ENCODE measurements at regions of chr10 and their contacts with region 1.

Region 1: GRCh38 chr10:15097011-15097812 is at the start of gene RPP38:
- DNase-seq: peak; percentile 94
- H3K4me3 Mint-ChIP-seq: peak within 1 kb of the TSS; percentile 100
- H3K27ac Mint-ChIP-seq: peak within 1 kb of the TSS; percentile 99
- H3K4me1 Mint-ChIP-seq: peaks cover 29% of the 10 kb centered on the region
- H3K27me3 Mint-ChIP-seq: peaks cover 10% of the 10 kb centered on the region
- total RNA-seq, gene RPP38: 19.6 and 24.8 TPM in 2 replicates

Region 2: DNA sequence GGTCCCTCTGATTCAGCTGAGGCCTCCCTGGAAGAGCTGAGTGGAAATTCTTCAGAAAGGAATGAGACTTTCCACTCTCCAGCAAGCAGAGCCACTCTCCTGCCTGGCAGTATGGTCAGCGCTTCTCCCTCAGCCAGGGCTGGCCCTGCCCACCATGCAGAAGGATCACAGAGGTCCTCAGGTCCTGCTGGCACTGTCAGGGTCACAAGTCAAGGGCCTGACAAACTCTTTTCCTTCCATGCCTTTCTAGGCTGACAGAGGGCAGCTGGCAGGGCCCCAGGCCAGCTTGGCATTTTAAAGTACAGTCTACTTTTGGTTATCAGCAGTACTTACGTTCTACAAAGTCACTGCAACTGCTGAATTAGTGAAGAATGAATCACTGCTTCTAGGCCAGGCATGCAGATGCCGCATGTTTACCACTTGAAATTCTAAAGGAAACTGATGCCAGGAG is 647.1 kb before region 1 on chr10:
- intact Hi-C with region 1: no loop called
- DNase-seq: no peak
- H3K4me3 Mint-ChIP-seq: no peak overlapping the region
- H3K27ac Mint-ChIP-seq: no peak overlapping the region
- H3K4me1 Mint-ChIP-seq: no peaks in the 10 kb centered on the region
- H3K27me3 Mint-ChIP-seq: peaks cover 9% of the 10 kb centered on the region

Region 3: GRCh38 chr10:14954001-14954770 is 143.0 kb before region 1 on chr10 and contains the start of gene DCLRE1C:
- intact Hi-C with region 1: loop called (anchors 1 kb)
- DNase-seq: peak; percentile 89
- H3K4me3 Mint-ChIP-seq: peak within 1 kb of the TSS; percentile 94
- H3K27ac Mint-ChIP-seq: peak within 1 kb of the TSS; percentile 95
- H3K4me1 Mint-ChIP-seq: peaks cover 57% of the 10 kb centered on the region
- H3K27me3 Mint-ChIP-seq: no peaks in the 10 kb centered on the region
- total RNA-seq, gene DCLRE1C: 15.5 and 20.9 TPM in 2 replicates

Region 4: DNA sequence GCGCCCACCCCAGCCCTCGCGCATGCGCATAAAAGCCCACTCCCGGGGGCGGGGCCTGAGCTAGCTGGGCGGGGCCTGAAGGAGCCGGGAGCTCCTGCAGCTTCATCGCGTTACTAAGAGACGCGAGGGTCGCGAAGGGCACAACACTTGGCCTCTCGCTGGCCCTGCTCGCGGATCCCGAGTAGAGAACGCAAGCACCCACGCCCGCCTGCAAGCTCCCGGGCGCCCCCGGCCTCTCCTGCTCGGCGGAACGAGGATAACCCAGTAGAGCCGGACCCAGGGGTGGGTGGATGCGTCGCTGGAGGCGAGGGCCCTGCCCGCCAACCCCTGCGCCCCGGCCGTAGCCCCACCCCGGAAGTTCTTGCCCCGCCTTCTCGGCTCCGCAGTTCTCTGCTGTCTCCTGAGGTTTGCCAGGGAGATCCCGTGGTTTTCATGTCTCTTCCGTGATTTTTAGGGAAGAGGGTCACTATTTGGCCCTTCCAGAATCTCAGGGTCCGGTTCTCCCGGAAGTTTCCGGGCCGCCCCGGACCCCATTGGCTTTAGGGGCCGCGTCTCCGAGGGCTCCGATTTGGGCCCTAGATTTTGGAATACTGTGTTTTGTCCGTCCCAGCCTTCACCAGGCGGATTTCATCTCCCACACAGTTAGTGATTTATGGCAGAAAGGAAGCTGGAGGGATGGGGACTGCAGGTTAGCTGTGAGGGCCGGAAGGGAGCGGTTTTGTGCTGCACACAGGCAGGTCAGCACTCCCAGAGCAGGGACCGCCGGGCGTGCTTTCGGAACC is 137.7 kb before region 1 on chr10 and contains the start of gene MEIG1:
- intact Hi-C with region 1: loop called (anchors 1 kb)
- DNase-seq: peak; percentile 91
- H3K4me3 Mint-ChIP-seq: peak within 1 kb of the TSS; percentile 97
- H3K27ac Mint-ChIP-seq: peak within 1 kb of the TSS; percentile 95
- H3K4me1 Mint-ChIP-seq: peaks cover 22% of the 10 kb centered on the region
- H3K27me3 Mint-ChIP-seq: no peaks in the 10 kb centered on the region
- total RNA-seq, gene MEIG1: 0.44 TPM in 1 of 2 replicates, not detected in the other

Region 5: GRCh38 chr10:15209827-15210509 is 112.8 kb after region 1 on chr10:
- intact Hi-C with region 1: loop called (anchors 2 kb)
- DNase-seq: peak; percentile 64
- H3K4me3 Mint-ChIP-seq: no peak overlapping the region
- H3K27ac Mint-ChIP-seq: no peak overlapping the region
- H3K4me1 Mint-ChIP-seq: peaks cover 51% of the 10 kb centered on the region
- H3K27me3 Mint-ChIP-seq: no peaks in the 10 kb centered on the region